ENCODE measurements at regions of chrX and their contacts with region 1.

Region 1: GRCh38 chrX:30889147-30890140 is at the start of gene TAB3:
- DNase-seq: peak; percentile 85 to 96 (median 92)
- ATAC-seq: peak; percentile 90
- H3K4me3 ChIP-seq: peak within 1 kb of the TSS; percentile 61 to 70
- H3K4me3 Mint-ChIP-seq: peak within 1 kb of the TSS; percentile 91
- H3K27ac ChIP-seq: peak within 1 kb of the TSS; percentile 83 to 87
- H3K27ac Mint-ChIP-seq: peak within 1 kb of the TSS; percentile 95
- H3K4me1 ChIP-seq: peaks cover 20% of the 10 kb centered on the region
- H3K4me1 Mint-ChIP-seq: peaks cover 39% of the 10 kb centered on the region
- H3K27me3 ChIP-seq: no peaks in the 10 kb centered on the region
- H3K27me3 Mint-ChIP-seq: no peaks in the 10 kb centered on the region
- CTCF ChIP-seq: no peak
- total RNA-seq, gene TAB3: 21.5 to 25.9 TPM

Region 2: DNA sequence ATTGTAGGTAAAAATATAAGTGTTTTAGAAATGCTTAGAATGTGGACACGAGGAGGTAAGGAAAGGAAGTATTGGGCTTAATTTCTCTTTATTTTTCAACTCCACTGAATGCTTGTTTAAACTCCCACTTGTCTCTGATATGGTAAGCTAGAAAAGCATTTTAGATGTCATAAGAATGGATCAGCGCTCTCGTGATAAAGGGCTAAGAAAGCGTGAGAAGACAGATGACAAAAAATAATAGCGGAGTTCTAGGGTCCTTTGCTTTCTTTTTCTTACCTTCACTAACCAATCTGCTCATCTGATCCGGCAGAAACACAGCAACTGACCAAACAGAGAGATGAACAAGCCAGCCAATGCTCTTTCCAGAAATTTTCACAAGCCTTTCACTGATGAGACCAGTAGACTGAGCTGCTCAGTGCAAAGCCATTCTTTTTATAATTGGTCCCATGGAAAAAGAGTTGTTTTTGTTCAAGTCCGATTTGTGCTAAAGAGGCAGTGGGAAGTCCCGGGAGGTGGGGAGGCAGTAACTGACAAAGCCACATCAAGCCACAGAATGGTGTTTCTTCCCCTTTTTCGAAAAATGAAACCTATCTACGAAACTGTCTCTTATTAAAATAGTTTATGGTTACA is 312.0 kb before region 1 on chrX and contains the start of gene TASL:
- CTCF ChIA-PET with region 1: no interaction called
- POLR2A ChIA-PET with region 1: no interaction called
- intact Hi-C with region 1: loop called (anchors 5 kb)
- DNase-seq: peak in 6 of 9 experiments; percentile 1 to 75 (median 26)
- ATAC-seq: peak; percentile 86
- H3K4me3 ChIP-seq: peak within 1 kb of the TSS; percentile 46 to 48
- H3K4me3 Mint-ChIP-seq: peak within 1 kb of the TSS; percentile 89
- H3K27ac ChIP-seq: peak within 1 kb of the TSS; percentile 61 to 67
- H3K27ac Mint-ChIP-seq: peak within 1 kb of the TSS; percentile 89
- H3K4me1 ChIP-seq: peaks cover 4% of the 10 kb centered on the region
- H3K4me1 Mint-ChIP-seq: peaks cover 22% of the 10 kb centered on the region
- H3K27me3 ChIP-seq: no peaks in the 10 kb centered on the region
- H3K27me3 Mint-ChIP-seq: no peaks in the 10 kb centered on the region
- CTCF ChIP-seq: no peak
- total RNA-seq, gene TASL: 0.22 to 0.31 TPM

Region 3: DNA sequence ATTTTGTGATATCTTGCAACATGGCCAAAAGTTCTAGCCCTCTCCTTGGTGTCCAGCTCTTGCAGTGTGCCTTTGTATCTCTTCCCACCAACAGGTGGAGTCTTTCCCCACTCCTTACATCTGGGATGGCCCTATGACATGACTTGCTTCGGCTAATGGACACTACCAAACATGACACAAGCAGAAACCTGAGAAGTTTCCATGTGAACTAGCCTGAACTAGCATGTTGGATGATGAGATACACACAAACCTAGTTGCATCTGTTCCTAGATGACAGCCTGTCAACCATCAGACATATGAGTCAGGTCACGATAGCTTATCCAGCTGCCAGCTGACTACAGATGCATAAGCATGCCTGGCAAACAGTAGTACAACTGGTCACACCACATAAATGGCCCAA is 389.9 kb after region 1 on chrX:
- CTCF ChIA-PET with region 1: no interaction called
- POLR2A ChIA-PET with region 1: no interaction called
- intact Hi-C with region 1: no loop called
- DNase-seq: no peak
- ATAC-seq: no peak
- H3K4me3 ChIP-seq: no peak overlapping the region
- H3K4me3 Mint-ChIP-seq: no peak overlapping the region
- H3K27ac ChIP-seq: no peak overlapping the region
- H3K27ac Mint-ChIP-seq: no peak overlapping the region
- H3K4me1 ChIP-seq: no peaks in the 10 kb centered on the region
- H3K4me1 Mint-ChIP-seq: no peaks in the 10 kb centered on the region
- H3K27me3 ChIP-seq: no peaks in the 10 kb centered on the region
- H3K27me3 Mint-ChIP-seq: no peaks in the 10 kb centered on the region
- CTCF ChIP-seq: no peak